Breast epithelium (tissue), 4 donors: ENCODE measurements at regions of chr17 and their contacts with region 1.

Region 1: GRCh38 chr17:49548506-49549310 is 27.0 kb upstream of the NXPH3 start:
- DNase-seq: no peak
- H3K4me3 ChIP-seq: no peak overlapping the region
- H3K27ac ChIP-seq: no peak overlapping the region
- H3K4me1 ChIP-seq: peaks cover 0 to 9% of the 10 kb centered on the region in 2 donors
- H3K27me3 ChIP-seq: no peaks in the 10 kb centered on the region
- CTCF ChIP-seq: peak in 2 of 3 donors; percentile 33 to 72
- POLR2A ChIP-seq: no peak

Region 2: DNA sequence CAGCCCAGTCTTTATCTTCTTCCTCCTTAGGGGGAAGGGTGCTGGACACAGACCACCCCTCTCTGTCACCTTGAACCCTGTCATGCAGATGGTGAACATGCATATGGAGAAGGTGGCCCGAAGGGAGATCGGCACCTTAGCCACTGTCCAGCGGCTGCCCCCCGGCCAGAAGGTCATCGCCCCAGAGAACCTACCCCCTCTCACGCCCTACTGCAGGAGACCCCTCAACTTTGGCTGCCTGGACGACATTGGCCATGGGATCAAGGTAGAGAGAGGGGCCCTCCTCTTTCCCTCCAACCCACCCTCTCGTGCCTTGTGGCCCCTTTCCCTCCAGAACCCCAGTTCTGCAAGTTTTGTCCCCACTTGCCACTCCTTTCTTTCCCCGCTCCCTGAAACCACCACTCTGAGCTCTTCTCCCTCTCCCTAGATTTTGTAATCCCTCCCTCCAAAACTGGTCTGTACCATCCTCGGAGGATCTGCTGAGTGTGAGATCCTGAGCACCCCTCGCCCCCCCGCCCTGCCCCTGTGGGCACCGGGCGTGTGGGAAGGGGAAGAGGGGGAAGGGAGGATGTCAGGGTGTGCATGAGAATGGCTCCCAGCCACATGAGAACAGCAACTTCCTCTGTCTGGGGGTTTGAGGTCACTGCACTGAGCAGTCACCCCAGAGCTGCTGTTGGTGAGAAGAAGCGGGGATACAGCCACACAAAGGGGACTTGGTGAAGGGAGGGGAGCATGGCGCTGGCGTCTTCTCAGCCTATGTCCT is 330.9 kb before region 1 on chr17:
- intact Hi-C with region 1: loop called (anchors 5 kb)
- DNase-seq: no peak
- H3K4me3 ChIP-seq: no peak overlapping the region
- H3K27ac ChIP-seq: peak overlapping the region in 1 of 2 donors; percentile 25
- H3K4me1 ChIP-seq: no peaks in the 10 kb centered on the region
- H3K27me3 ChIP-seq: peaks cover 3 to 26% of the 10 kb centered on the region in 2 donors
- CTCF ChIP-seq: no peak
- POLR2A ChIP-seq: no peak

Region 3: GRCh38 chr17:49315551-49316257 is 233.0 kb before region 1 on chr17:
- intact Hi-C with region 1: loop called (anchors 5 kb)
- DNase-seq: peak; percentile 68 to 76
- H3K4me3 ChIP-seq: peak overlapping the region in 1 of 3 donors; percentile 7
- H3K27ac ChIP-seq: peak overlapping the region; percentile 49 to 72
- H3K4me1 ChIP-seq: peaks cover 0 to 5% of the 10 kb centered on the region in 2 donors
- H3K27me3 ChIP-seq: no peaks in the 10 kb centered on the region
- CTCF ChIP-seq: peak; percentile 26 to 86 (median 83)
- POLR2A ChIP-seq: no peak

Region 4: GRCh38 chr17:49434821-49435670 is 113.7 kb before region 1 on chr17:
- intact Hi-C with region 1: loop called (anchors 5 kb)
- DNase-seq: peak; percentile 51 to 61
- H3K4me3 ChIP-seq: peak overlapping the region in 1 of 3 donors; percentile 5
- H3K27ac ChIP-seq: peak overlapping the region; percentile 63 to 66
- H3K4me1 ChIP-seq: no peaks in the 10 kb centered on the region
- H3K27me3 ChIP-seq: peaks cover 0 to 9% of the 10 kb centered on the region in 2 donors
- CTCF ChIP-seq: peak; percentile 49 to 66 (median 57)
- POLR2A ChIP-seq: no peak